ENCODE measurements at regions of chr3 and their contacts with region 1.

Region 1: DNA sequence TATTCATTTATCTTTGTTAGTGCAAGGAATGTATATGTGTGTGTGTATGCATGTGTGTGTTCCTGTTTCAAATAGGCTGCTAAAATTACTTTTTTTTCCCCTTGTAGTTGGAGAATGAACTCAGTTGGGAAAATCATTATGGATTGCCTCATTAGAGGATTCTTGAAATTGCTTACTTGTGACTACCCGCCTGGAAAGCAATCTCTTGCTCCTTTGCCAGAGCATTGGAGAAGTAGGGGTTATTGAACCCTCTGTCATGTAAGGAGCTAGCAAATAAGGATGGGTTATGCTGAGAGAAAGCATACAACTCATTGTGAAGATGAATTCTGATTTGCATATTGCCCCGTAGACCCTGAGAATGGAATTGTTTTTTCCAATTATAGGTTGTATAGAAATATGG is 474.5 kb downstream of the CADM2 start:
- DNase-seq: no peak
- H3K4me3 Mint-ChIP-seq: no peak overlapping the region
- H3K27ac Mint-ChIP-seq: no peak overlapping the region
- H3K4me1 Mint-ChIP-seq: no peaks in the 10 kb centered on the region
- H3K27me3 Mint-ChIP-seq: peaks cover 56% of the 10 kb centered on the region
- CTCF ChIP-seq: no peak

Region 2: GRCh38 chr3:85455561-85456196 is 22.4 kb after region 1 on chr3:
- CTCF ChIA-PET with region 1: no interaction called
- POLR2A ChIA-PET with region 1: no interaction called
- intact Hi-C with region 1: loop called (anchors 1 kb)
- DNase-seq: no peak
- H3K4me3 Mint-ChIP-seq: no peak overlapping the region
- H3K27ac Mint-ChIP-seq: no peak overlapping the region
- H3K4me1 Mint-ChIP-seq: no peaks in the 10 kb centered on the region
- H3K27me3 Mint-ChIP-seq: peaks cover 57% of the 10 kb centered on the region
- CTCF ChIP-seq: no peak

Region 3: DNA sequence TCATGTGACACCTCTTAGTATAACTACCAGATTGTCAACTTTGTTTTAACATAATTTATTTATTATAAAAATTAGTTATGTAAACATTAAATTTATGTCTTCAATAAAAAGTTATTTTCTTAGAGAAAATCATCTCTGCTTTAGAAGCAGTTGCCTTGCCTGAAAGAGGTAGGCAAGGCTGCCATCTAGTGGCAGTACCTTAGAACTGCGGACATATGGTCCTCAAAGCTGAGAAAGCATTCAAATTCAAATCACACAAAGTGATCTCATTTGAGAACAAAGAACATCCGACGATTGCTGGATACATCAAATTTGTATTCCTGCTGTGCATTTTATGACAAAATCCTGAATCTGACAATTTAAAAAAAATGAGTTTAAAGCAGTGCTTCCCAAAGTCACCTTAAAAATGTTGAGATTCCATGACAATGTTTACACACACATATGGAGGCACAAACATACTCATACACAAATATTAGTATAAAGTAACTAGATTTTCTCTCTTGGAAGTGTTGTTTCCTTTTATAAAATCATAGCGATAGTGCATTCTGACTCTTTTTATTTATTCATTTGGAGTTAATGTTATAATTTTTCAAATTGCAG is 142.9 kb after region 1 on chr3:
- CTCF ChIA-PET with region 1: no interaction called
- POLR2A ChIA-PET with region 1: no interaction called
- intact Hi-C with region 1: no loop called
- DNase-seq: peak; percentile 70
- H3K4me3 Mint-ChIP-seq: no peak overlapping the region
- H3K27ac Mint-ChIP-seq: no peak overlapping the region
- H3K4me1 Mint-ChIP-seq: no peaks in the 10 kb centered on the region
- H3K27me3 Mint-ChIP-seq: peaks cover 20% of the 10 kb centered on the region
- CTCF ChIP-seq: peak; percentile 77

Region 4: GRCh38 chr3:86147119-86147518 is 713.8 kb after region 1 on chr3:
- CTCF ChIA-PET with region 1: no interaction called
- POLR2A ChIA-PET with region 1: no interaction called
- intact Hi-C with region 1: no loop called
- DNase-seq: peak; percentile 9
- H3K4me3 Mint-ChIP-seq: no peak overlapping the region
- H3K27ac Mint-ChIP-seq: no peak overlapping the region
- H3K4me1 Mint-ChIP-seq: no peaks in the 10 kb centered on the region
- H3K27me3 Mint-ChIP-seq: peaks cover 54% of the 10 kb centered on the region
- CTCF ChIP-seq: no peak

Measured in MCF 10A (cell line).